ENCODE measurements at regions of chrX and their contacts with region 1.

Region 1: GRCh38 chrX:100768679-100769338 is 36.9 kb upstream of the SYTL4 start:
- DNase-seq: peak; percentile 52 to 83
- H3K4me3 ChIP-seq: no peak overlapping the region
- H3K27ac ChIP-seq: no peak overlapping the region
- H3K4me1 ChIP-seq: no peaks in the 10 kb centered on the region
- H3K27me3 ChIP-seq: peaks cover 0 to 4% of the 10 kb centered on the region in 2 donors
- CTCF ChIP-seq: peak; percentile 94 to 99 (median 96)
- POLR2A ChIP-seq: no peak

Region 2: DNA sequence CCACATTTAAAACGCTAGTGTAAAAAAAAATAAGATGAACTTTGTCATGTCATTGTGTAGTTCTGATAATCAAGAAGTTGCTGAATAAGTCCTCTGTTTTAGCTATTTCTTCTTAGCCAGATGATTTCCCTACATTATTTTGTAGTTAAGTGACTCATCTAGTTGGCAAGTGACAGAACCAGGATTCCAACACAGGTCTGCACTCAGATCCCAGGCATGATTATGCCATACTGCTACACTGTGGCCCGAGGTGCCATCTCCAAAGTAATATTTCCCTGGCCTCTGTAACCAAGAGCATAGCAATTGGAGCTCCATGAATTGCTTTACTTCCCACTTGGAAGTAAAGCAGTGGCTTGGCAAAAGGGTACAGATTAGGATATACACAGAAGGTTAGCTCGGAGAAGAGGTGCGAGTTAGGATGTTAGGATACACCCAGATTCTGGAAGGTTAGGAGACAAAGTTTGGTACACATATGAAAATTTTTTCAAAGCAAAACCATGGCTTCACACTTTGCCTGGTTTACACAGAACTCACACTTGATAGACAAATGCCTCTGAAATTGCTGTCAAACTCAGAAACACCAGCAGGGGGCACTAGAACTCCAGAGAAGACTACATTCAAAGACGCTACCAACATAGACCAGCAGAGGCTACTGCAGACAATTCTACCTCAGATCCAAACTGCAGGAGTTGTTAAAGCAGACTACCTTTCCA is 83.4 kb before region 1 on chrX:
- intact Hi-C with region 1: loop called (anchors 10 kb)
- DNase-seq: peak; percentile 48 to 57
- H3K4me3 ChIP-seq: no peak overlapping the region
- H3K27ac ChIP-seq: peak overlapping the region in 1 of 2 donors; percentile 20
- H3K4me1 ChIP-seq: no peaks in the 10 kb centered on the region
- H3K27me3 ChIP-seq: peaks cover 0 to 47% of the 10 kb centered on the region in 2 donors
- CTCF ChIP-seq: peak; percentile 84 to 94 (median 88)
- POLR2A ChIP-seq: no peak

Region 3: GRCh38 chrX:100829730-100830129 is 60.9 kb after region 1 on chrX:
- intact Hi-C with region 1: no loop called
- DNase-seq: no peak
- H3K4me3 ChIP-seq: no peak overlapping the region
- H3K27ac ChIP-seq: no peak overlapping the region
- H3K4me1 ChIP-seq: no peaks in the 10 kb centered on the region
- H3K27me3 ChIP-seq: peaks cover 0 to 38% of the 10 kb centered on the region in 2 donors
- CTCF ChIP-seq: no peak
- POLR2A ChIP-seq: no peak

Measured in breast epithelium (tissue), 4 donors.